Activated naive CD4-positive, alpha-beta T cell treated with anti-CD3 and anti-CD28 coated beads, Interleukin-2, amount 10 ng/mL, durations not matched to agents 7 days and 5 days (primary cell): ENCODE measurements at regions of chr14 and their contacts with region 1.

Region 1: DNA sequence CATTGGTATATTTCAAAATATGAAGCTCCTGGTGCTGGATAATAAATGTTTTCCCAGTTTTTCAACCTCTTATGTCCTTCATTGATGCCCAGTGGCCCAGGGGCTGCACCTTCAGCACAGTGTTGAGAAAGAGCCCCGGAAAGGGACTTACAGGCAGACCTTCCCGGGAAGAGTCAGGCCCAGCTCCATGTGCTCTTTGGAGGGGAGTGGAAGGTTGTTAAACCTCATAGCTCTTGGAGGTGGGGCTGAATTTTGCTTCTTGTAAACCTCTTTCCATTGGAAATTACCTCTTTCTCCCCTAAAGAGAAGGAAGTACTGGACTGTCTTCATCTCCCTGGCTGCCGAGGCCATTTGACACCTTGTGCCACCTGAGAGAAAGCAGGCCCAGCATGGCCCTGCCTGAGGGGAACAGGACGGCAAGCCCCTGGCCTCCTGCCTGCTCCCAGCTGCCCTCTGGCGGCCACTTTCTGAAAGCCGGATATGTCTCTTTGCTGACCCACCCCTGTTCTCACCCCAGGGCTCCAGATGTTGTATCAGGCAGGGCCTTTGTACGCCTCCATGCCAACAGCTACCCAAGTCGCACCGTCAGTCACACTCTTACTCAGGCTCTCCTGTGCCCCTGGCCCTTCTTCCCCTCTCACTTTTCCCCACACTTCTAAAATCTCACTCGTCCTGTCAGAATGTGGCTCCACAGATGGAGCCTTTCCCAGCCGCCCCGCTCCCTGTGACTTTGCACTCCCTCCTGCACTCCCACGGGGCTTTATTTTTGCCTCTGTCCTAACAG is 43.0 kb downstream of the EVL start:
- DNase-seq: peak; percentile 91
- H3K4me3 Mint-ChIP-seq: no peak overlapping the region
- H3K27ac Mint-ChIP-seq: peak overlapping the region; percentile 94
- H3K4me1 Mint-ChIP-seq: peaks cover 77% of the 10 kb centered on the region
- H3K27me3 Mint-ChIP-seq: no peaks in the 10 kb centered on the region

Region 2: DNA sequence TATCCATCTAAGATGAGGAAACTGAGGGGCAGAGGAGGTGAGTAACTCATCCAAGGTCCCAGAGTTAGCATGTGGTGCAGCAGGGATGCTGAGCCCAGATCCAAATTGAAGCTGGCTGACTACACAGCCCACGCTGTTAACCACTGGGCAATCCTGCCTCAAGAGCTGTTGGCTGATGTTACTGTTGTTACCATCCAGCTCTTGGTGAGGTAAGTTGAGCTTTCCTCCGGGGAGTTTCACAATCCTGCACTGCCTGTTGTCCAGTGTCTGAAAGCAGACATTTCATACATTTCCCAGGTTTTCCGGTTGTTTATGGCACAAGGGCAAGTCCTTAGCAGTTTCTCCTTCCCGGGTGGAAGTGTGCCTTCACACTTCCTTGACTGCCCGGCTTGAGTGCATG is 409.6 kb before region 1 on chr14:
- CTCF ChIA-PET with region 1: no interaction called
- DNase-seq: no peak
- H3K4me3 Mint-ChIP-seq: no peak overlapping the region
- H3K27ac Mint-ChIP-seq: no peak overlapping the region
- H3K4me1 Mint-ChIP-seq: peaks cover 12% of the 10 kb centered on the region
- H3K27me3 Mint-ChIP-seq: peaks cover 30% of the 10 kb centered on the region

Region 3: GRCh38 chr14:99982537-99983250 is 125.5 kb before region 1 on chr14:
- CTCF ChIA-PET with region 1: interaction called, 29 read pairs
- DNase-seq: peak; percentile 71
- H3K4me3 Mint-ChIP-seq: no peak overlapping the region
- H3K27ac Mint-ChIP-seq: no peak overlapping the region
- H3K4me1 Mint-ChIP-seq: peaks cover 17% of the 10 kb centered on the region
- H3K27me3 Mint-ChIP-seq: no peaks in the 10 kb centered on the region

Region 4: GRCh38 chr14:100056964-100057795 is 51.1 kb before region 1 on chr14:
- CTCF ChIA-PET with region 1: interaction called, 15 read pairs
- DNase-seq: peak; percentile 49
- H3K4me3 Mint-ChIP-seq: peak overlapping the region; percentile 30
- H3K27ac Mint-ChIP-seq: peak overlapping the region; percentile 24
- H3K4me1 Mint-ChIP-seq: peaks cover 58% of the 10 kb centered on the region
- H3K27me3 Mint-ChIP-seq: no peaks in the 10 kb centered on the region

Region 5: DNA sequence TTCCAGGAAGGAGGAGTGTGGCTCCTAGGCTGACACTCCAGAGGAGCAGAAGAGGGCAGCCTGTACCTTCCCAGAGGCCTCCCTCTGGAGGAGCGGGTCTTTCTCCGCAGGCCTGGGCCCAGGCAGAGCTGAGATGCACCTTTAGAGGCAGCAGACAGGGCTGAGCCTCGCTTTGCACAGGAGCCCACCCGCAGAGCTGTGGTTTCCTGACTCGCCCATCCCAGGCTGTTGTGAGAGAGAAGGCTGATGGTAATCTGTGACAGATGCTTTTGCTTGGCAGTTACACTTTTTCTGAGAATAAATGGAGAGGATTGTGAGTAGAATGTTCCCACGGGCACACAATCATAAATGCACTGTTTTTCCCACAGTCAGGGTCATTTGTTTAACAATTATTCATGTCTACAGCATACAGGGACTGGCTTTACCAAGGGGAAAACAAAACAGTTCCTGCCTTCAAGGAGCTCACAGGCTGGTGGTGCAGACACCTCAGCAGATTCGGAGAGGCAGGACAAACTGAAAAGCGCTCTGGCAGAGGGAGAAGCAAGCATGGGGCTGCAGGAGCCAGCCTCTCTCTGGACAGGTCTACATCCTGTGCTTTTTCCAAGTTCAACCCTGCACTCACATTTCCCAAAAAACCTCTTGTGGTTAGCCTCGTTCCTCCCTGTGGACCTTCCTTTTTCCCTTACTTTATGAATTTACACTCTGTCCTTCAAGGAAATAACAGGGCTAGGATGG is 29.1 kb before region 1 on chr14:
- CTCF ChIA-PET with region 1: interaction called, 488 read pairs
- DNase-seq: peak; percentile 93
- H3K4me3 Mint-ChIP-seq: peak overlapping the region; percentile 73
- H3K27ac Mint-ChIP-seq: peak overlapping the region; percentile 97
- H3K4me1 Mint-ChIP-seq: peaks cover 99% of the 10 kb centered on the region
- H3K27me3 Mint-ChIP-seq: no peaks in the 10 kb centered on the region

Region 6: GRCh38 chr14:100096570-100096971 is 11.7 kb before region 1 on chr14:
- CTCF ChIA-PET with region 1: interaction called, 15 read pairs
- DNase-seq: no peak
- H3K4me3 Mint-ChIP-seq: no peak overlapping the region
- H3K27ac Mint-ChIP-seq: peak overlapping the region; percentile 73
- H3K4me1 Mint-ChIP-seq: peaks cover 94% of the 10 kb centered on the region
- H3K27me3 Mint-ChIP-seq: no peaks in the 10 kb centered on the region